ENCODE measurements at regions of chr18 and their contacts with region 1.

Region 1: DNA sequence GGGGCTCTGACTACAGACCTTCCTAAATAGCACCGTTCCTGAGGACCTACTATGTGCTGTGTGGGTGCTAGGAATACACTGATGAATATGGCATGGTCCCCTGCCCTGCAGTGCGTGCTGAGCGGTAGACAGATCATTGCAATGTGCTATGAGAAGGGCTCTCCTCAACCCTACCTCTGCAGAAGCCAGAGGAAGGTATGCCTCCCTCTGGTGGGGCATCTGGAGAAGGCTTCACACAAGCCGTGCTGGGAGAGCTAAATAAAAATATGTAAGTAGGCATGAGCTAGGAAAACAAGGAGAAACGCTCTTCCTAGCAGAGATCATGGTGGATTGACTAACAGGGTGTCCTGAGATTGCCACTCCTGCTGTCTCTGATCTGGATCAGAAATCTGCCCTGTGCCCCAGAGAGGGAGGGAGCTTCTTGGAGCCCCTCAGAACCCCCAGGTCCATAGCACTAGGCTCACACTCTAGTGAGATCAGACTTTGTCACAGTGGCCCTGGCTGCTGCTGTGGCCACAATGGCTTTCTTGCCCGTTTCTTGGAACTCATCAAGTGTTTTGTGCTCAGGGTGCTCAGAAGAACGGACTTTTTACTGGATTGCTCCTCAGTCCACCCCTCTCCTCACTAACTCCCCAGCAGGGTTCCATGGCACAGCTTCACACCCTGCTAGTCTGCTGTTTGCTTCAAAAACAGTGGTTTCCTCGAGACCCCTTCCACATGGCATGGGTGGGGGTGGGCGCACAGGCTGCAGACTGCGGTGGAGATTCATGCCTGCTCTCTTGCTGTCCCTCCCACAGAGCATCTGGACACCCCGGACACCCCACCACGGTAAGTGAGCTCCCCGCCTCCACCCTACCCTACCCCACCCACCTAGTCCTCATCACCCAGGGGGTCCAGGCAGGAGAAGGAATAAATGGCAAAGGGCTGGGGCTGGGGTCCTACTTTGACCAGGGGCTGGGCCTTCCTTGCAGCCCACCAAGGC is 14.2 kb downstream of the SIGLEC15 start:
- DNase-seq: peak in 4 of 9 donors; percentile 20 to 36 (median 34)
- ATAC-seq: peak; percentile 62
- H3K4me3 ChIP-seq: no peak overlapping the region
- H3K4me3 Mint-ChIP-seq: peak overlapping the region in 5 of 10 donors; percentile 32 to 48 (median 36)
- H3K27ac ChIP-seq: no peak overlapping the region
- H3K27ac Mint-ChIP-seq: no peak overlapping the region
- H3K4me1 ChIP-seq: no peaks in the 10 kb centered on the region
- H3K4me1 Mint-ChIP-seq: peaks cover 5 to 21% (median 10%) of the 10 kb centered on the region in 7 donors
- H3K27me3 ChIP-seq: peaks cover 0 to 4% of the 10 kb centered on the region in 2 donors
- H3K27me3 Mint-ChIP-seq: peaks cover 30 to 56% (median 40%) of the 10 kb centered on the region in 5 donors

Region 2: GRCh38 chr18:45722899-45723298 is 116.8 kb before region 1 on chr18:
- CTCF ChIA-PET with region 1: no interaction called
- POLR2A ChIA-PET with region 1: no interaction called
- intact Hi-C with region 1: loop called in 1 of 2 experiments (anchors 5 kb)
- DNase-seq: peak in 8 of 9 donors; percentile 7 to 74 (median 40)
- ATAC-seq: peak; percentile 90
- H3K4me3 ChIP-seq: no peak overlapping the region
- H3K4me3 Mint-ChIP-seq: no peak overlapping the region
- H3K27ac ChIP-seq: no peak overlapping the region
- H3K27ac Mint-ChIP-seq: no peak overlapping the region
- H3K4me1 ChIP-seq: no peaks in the 10 kb centered on the region
- H3K4me1 Mint-ChIP-seq: peaks cover 0 to 15% (median 0%) of the 10 kb centered on the region in 7 donors
- H3K27me3 ChIP-seq: no peaks in the 10 kb centered on the region
- H3K27me3 Mint-ChIP-seq: peaks cover 0 to 35% (median 0%) of the 10 kb centered on the region in 5 donors